ENCODE measurements at regions of chr7 and their contacts with region 1.

Region 1: GRCh38 chr7:50467817-50468610 is 17.9 kb upstream of the FIGNL1 start:
- DNase-seq: peak; percentile 93
- H3K4me3 ChIP-seq: peak overlapping the region in 1 of 2 experiments; percentile 17; a peak in 1 of 4 replicates
- H3K27ac ChIP-seq: peak overlapping the region in 1 of 2 experiments; percentile 88; a peak in 2 of 4 replicates
- H3K4me1 ChIP-seq: peaks cover 0 to 44% of the 10 kb centered on the region in 2 experiments; a peak in 1 of 4 replicates
- H3K27me3 ChIP-seq: peaks cover 3% of the 10 kb centered on the region; the same call in 1 of the 2 replicates
- CTCF ChIP-seq: peak; percentile 98
- EP300 ChIP-seq: no peak; a peak in 1 of 4 replicates
- RAD21 ChIP-seq: peak; percentile 99

Region 2: DNA sequence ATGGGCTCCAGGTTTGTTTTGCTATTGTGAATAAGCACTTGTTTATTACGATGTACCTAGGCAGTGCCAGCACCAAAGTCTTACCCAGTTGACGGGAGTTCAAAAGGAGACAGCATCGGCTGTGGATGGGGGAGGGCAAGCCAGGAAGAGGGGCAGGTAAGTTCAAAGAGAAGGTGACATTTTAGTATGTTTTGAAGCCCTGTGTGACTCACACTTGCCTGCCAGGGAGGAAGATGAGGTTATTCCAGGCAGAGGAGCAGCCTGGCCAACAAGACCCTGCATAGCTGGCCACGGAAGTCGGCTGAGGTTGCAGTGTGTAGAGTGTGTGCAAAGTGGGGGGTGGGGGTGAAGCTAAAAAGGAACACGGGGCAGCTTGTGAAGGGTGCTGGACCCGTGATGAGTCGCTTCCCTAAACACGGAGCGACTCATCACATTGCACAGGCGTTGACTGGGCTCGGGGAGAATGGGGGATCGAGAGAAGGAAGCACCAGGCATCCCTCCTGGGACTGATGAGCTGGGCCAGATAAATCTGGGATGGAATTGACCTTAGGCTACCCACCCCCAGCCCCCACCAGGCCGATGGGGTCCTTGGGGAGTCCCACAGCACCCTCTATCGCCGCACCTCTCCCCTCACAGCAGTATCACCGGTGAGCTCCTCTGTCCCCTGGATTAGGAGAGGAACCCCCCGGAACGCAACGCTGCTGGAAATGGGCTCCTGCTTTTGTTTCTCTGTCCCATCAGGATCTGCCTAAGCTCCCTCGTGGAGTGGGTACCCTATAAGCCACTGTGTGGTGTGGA is 261.4 kb before region 1 on chr7:
- CTCF ChIA-PET with region 1: interaction called, 24 read pairs
- POLR2A ChIA-PET with region 1: no interaction called
- DNase-seq: no peak
- H3K4me3 ChIP-seq: no peak overlapping the region
- H3K27ac ChIP-seq: no peak overlapping the region
- H3K4me1 ChIP-seq: no peaks in the 10 kb centered on the region
- H3K27me3 ChIP-seq: no peaks in the 10 kb centered on the region
- CTCF ChIP-seq: no peak
- EP300 ChIP-seq: no peak
- RAD21 ChIP-seq: no peak

Region 3: DNA sequence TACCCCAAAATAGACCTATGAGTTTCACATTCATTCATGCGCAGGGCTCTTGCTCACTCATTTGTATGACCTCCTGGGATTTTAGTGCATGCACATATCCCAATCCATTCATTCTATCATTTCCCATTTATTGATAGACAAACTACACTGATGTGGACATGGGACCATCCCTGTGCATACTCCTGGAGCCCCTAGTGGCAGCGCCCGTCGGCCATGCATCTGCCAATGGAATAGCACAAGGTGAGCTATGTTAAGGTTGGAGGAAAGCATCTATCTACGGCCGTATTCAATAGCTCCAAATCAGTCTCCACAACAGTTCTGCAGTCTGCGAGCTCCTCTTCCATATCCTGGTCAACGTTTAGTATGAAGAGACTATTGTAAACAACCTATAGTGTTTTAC is 13.9 kb after region 1 on chr7:
- CTCF ChIA-PET with region 1: interaction called, 31 read pairs
- POLR2A ChIA-PET with region 1: no interaction called
- DNase-seq: no peak
- H3K4me3 ChIP-seq: no peak overlapping the region
- H3K27ac ChIP-seq: peak overlapping the region in 1 of 2 experiments; percentile 58; a peak in 2 of 4 replicates
- H3K4me1 ChIP-seq: peaks cover 0 to 29% of the 10 kb centered on the region in 2 experiments; a peak in 2 of 4 replicates
- H3K27me3 ChIP-seq: 0 out of 2 replicates have a peak, but pooled peaks cover 11% of the 10 kb centered on the region
- CTCF ChIP-seq: peak; percentile 17; the same call in 1 of the 2 replicates
- EP300 ChIP-seq: no peak
- RAD21 ChIP-seq: no peak

Region 4: GRCh38 chr7:50507898-50508470 is 40.0 kb after region 1 on chr7:
- CTCF ChIA-PET with region 1: interaction called, 51 read pairs
- POLR2A ChIA-PET with region 1: interaction called, 7 read pairs
- DNase-seq: peak; percentile 86
- H3K4me3 ChIP-seq: no peak overlapping the region
- H3K27ac ChIP-seq: peak overlapping the region in 1 of 2 experiments; percentile 98; a peak in 3 of 4 replicates
- H3K4me1 ChIP-seq: peaks cover 0 to 62% of the 10 kb centered on the region in 2 experiments; a peak in 2 of 4 replicates
- H3K27me3 ChIP-seq: peaks cover 15% of the 10 kb centered on the region; the same call in 1 of the 2 replicates
- CTCF ChIP-seq: no peak
- EP300 ChIP-seq: peak in 1 of 2 experiments; percentile 98; a peak in 2 of 4 replicates
- RAD21 ChIP-seq: peak; percentile 33

Region 5: GRCh38 chr7:50544992-50545391 is 77.0 kb after region 1 on chr7:
- CTCF ChIA-PET with region 1: interaction called, 15 read pairs
- POLR2A ChIA-PET with region 1: no interaction called
- DNase-seq: no peak
- H3K4me3 ChIP-seq: no peak overlapping the region
- H3K27ac ChIP-seq: peak overlapping the region in 1 of 2 experiments; percentile 56; a peak in 1 of 4 replicates
- H3K4me1 ChIP-seq: peaks cover 0 to 57% of the 10 kb centered on the region in 2 experiments; a peak in 2 of 4 replicates
- H3K27me3 ChIP-seq: peaks cover 18% of the 10 kb centered on the region; the same call in 1 of the 2 replicates
- CTCF ChIP-seq: no peak
- EP300 ChIP-seq: no peak
- RAD21 ChIP-seq: no peak

Region 6: DNA sequence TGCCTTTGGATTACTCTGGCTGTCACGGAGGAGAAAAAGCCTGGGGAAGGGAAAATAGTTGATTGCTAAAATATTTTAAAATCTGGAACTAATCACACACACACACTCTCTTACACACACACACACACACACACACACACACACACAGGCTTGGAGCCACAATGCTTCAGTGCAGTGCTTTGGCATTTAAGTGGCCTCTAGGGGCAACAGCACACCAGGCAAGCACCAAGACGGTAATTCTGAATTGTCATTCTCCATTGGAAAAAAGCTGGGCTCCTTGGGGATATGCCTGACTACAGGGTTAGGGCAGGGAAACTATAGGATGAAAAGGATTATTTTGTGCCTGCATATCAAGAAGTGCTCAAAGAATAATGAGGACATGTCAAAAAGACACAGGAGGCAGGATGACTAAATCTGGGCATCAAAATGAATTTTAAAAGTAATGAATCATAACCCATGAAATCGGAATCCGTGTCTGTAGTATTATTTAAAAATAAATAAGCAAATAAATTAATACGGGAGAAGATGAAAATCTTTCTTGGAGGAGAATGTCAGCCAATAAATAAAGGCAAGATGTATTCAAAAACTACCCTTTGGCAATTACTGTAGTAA is 127.6 kb after region 1 on chr7:
- CTCF ChIA-PET with region 1: interaction called, 28 read pairs
- POLR2A ChIA-PET with region 1: no interaction called
- DNase-seq: peak; percentile 76
- H3K4me3 ChIP-seq: no peak overlapping the region
- H3K27ac ChIP-seq: no peak overlapping the region
- H3K4me1 ChIP-seq: peaks cover 0 to 19% of the 10 kb centered on the region in 2 experiments; a peak in 1 of 4 replicates
- H3K27me3 ChIP-seq: no peaks in the 10 kb centered on the region
- CTCF ChIP-seq: peak; percentile 73
- EP300 ChIP-seq: no peak
- RAD21 ChIP-seq: peak; percentile 75

Region 7: GRCh38 chr7:50679218-50680007 is 211.4 kb after region 1 on chr7:
- CTCF ChIA-PET with region 1: interaction called, 157 read pairs
- POLR2A ChIA-PET with region 1: interaction called, 3 read pairs
- DNase-seq: peak; percentile 80
- H3K4me3 ChIP-seq: no peak overlapping the region
- H3K27ac ChIP-seq: no peak overlapping the region
- H3K4me1 ChIP-seq: peaks cover 0 to 22% of the 10 kb centered on the region in 2 experiments; a peak in 2 of 4 replicates
- H3K27me3 ChIP-seq: no peaks in the 10 kb centered on the region
- CTCF ChIP-seq: peak; percentile 68
- EP300 ChIP-seq: no peak
- RAD21 ChIP-seq: peak; percentile 99

Region 8: GRCh38 chr7:50696810-50697582 is 229.0 kb after region 1 on chr7:
- CTCF ChIA-PET with region 1: no interaction called
- POLR2A ChIA-PET with region 1: no interaction called
- DNase-seq: no peak
- H3K4me3 ChIP-seq: no peak overlapping the region
- H3K27ac ChIP-seq: no peak overlapping the region
- H3K4me1 ChIP-seq: no peaks in the 10 kb centered on the region
- H3K27me3 ChIP-seq: no peaks in the 10 kb centered on the region
- CTCF ChIP-seq: peak; percentile 75
- EP300 ChIP-seq: no peak
- RAD21 ChIP-seq: peak; percentile 39

Measured in SK-N-SH (cell line).